GM23248 (cell line): ENCODE measurements at regions of chr9 and their contacts with region 1.

Region 1: GRCh38 chr9:86795823-86796553 is 151.3 kb downstream of the GAS1 start:
- DNase-seq: peak; percentile 91
- H3K4me3 ChIP-seq: peak overlapping the region; percentile 34
- H3K27ac ChIP-seq: peak overlapping the region; percentile 49
- H3K4me1 ChIP-seq: peaks cover 37% of the 10 kb centered on the region
- H3K27me3 ChIP-seq: no peaks in the 10 kb centered on the region

Region 2: GRCh38 chr9:86637515-86637914 is 158.5 kb before region 1 on chr9:
- in situ Hi-C with region 1: loop called (anchors 10 kb)
- DNase-seq: peak; percentile 43
- H3K4me3 ChIP-seq: no peak overlapping the region
- H3K27ac ChIP-seq: no peak overlapping the region
- H3K4me1 ChIP-seq: no peaks in the 10 kb centered on the region
- H3K27me3 ChIP-seq: no peaks in the 10 kb centered on the region